CD4-positive, alpha-beta memory T cell (primary cell): ENCODE measurements at regions of chr2 and their contacts with region 1.

Region 1: GRCh38 chr2:113257516-113258264 is 21.0 kb downstream of the PAX8 start:
- DNase-seq: no peak
- H3K4me3 ChIP-seq: no peak overlapping the region
- H3K4me3 Mint-ChIP-seq: no peak overlapping the region
- H3K27ac ChIP-seq: no peak overlapping the region
- H3K27ac Mint-ChIP-seq: peak overlapping the region in 2 of 7 donors; percentile 40 to 54
- H3K4me1 ChIP-seq: peaks cover 38% of the 10 kb centered on the region
- H3K4me1 Mint-ChIP-seq: peaks cover 33 to 53% (median 42%) of the 10 kb centered on the region in 4 donors
- H3K27me3 ChIP-seq: no peaks in the 10 kb centered on the region
- H3K27me3 Mint-ChIP-seq: no peaks in the 10 kb centered on the region

Region 2: DNA sequence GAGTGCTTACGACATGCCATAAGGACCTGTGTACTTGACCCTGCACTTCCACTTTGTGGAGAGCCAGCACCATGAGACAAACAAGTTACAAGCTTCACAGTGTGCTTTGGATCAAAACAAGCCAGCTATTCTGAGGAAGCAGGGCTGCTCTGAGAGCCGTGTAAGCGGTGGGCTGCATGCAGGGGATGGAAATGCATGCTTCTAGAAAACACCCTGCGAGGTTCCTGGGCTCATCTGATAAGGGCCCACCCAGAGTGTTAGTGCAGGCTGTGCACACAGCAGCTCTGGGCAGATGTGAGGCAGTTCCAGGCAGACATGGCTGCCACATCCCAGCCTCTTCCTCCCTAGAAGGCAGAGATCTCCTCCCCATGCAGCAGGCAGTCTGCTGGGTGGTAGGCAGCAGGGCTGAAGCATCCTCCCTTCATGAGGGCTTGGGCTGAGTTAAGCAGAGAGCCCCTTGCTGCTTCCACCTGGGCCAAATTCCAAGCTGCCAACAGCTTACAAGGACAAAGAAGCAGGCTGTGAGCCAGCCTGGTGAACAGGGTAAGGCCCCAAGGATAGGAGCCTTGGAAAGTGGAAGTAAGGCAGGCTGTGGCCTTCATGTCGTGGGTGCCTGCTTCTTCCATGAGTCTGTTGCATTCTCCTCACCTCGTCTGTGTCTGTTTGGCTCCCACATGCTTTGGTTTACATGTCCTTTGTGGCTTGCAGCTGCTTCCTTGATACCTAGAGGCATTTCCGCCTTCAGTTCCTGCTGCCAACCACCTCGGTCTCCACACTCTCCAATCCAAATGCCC is 76.2 kb before region 1 on chr2:
- CTCF ChIA-PET with region 1: no interaction called
- POLR2A ChIA-PET with region 1: no interaction called
- intact Hi-C with region 1: no loop called
- DNase-seq: peak in 3 of 5 donors; percentile 27 to 36 (median 29)
- H3K4me3 ChIP-seq: peak overlapping the region in 1 of 2 donors; percentile 7
- H3K4me3 Mint-ChIP-seq: peak overlapping the region; percentile 61 to 93 (median 70)
- H3K27ac ChIP-seq: peak overlapping the region; percentile 27
- H3K27ac Mint-ChIP-seq: peak overlapping the region; percentile 86 to 94 (median 91)
- H3K4me1 ChIP-seq: peaks cover 100% of the 10 kb centered on the region
- H3K4me1 Mint-ChIP-seq: peaks cover 69 to 99% (median 90%) of the 10 kb centered on the region in 4 donors
- H3K27me3 ChIP-seq: no peaks in the 10 kb centered on the region
- H3K27me3 Mint-ChIP-seq: no peaks in the 10 kb centered on the region

Region 3: DNA sequence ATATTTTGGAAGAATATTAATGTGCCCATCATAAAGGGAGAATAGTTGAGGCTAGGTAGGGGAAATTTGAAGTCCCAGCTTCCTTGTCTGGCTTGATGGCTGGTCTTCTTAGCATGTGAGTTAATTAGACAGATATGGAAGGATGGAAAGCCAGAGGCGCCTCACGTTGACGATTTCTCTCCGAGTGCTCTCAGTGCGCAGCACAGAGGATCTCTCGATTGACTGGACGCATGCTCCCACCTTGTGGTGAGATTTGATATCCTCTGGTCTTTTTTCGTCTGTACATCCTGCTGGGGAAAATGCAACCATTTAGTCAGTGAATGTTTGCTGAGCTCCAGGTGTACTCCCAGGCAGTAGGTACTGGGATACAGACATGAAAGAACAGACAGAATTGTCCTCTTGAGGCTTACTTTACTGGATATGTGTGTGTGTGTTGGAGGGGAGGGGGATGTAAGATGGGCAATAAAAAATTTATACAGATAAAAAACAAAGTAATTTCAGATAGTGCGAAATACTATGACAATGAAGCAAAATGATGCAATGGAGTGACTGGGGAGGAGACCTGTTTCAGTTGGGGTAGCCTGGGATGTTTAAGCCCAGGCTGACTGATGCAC is 112.9 kb after region 1 on chr2:
- CTCF ChIA-PET with region 1: interaction called, 20 read pairs
- POLR2A ChIA-PET with region 1: interaction called, 3 read pairs
- intact Hi-C with region 1: no loop called
- DNase-seq: peak; percentile 61 to 70 (median 66)
- H3K4me3 ChIP-seq: no peak overlapping the region
- H3K4me3 Mint-ChIP-seq: no peak overlapping the region
- H3K27ac ChIP-seq: no peak overlapping the region
- H3K27ac Mint-ChIP-seq: peak overlapping the region in 2 of 7 donors; percentile 4 to 76
- H3K4me1 ChIP-seq: no peaks in the 10 kb centered on the region
- H3K4me1 Mint-ChIP-seq: peaks cover 0 to 5% (median 1%) of the 10 kb centered on the region in 4 donors
- H3K27me3 ChIP-seq: no peaks in the 10 kb centered on the region
- H3K27me3 Mint-ChIP-seq: peaks cover 4 to 5% of the 10 kb centered on the region in 2 donors